Gastrocnemius medialis (tissue), 4 donors: ENCODE measurements at regions of chr15 and their contacts with region 1.

Region 1: GRCh38 chr15:56245871-56246814 is 2.5 kb upstream of the RFX7 start:
- DNase-seq: peak; percentile 69 to 82
- ATAC-seq: peak; percentile 53 to 77
- H3K4me3 ChIP-seq: peak overlapping the region; percentile 36 to 62 (median 42)
- H3K27ac ChIP-seq: peak overlapping the region; percentile 79 to 97 (median 84)
- H3K4me1 ChIP-seq: peaks cover 30 to 33% of the 10 kb centered on the region in 2 donors
- H3K27me3 ChIP-seq: no peaks in the 10 kb centered on the region
- CTCF ChIP-seq: peak; percentile 90 to 99 (median 99)
- POLR2A ChIP-seq: no peak

Region 2: DNA sequence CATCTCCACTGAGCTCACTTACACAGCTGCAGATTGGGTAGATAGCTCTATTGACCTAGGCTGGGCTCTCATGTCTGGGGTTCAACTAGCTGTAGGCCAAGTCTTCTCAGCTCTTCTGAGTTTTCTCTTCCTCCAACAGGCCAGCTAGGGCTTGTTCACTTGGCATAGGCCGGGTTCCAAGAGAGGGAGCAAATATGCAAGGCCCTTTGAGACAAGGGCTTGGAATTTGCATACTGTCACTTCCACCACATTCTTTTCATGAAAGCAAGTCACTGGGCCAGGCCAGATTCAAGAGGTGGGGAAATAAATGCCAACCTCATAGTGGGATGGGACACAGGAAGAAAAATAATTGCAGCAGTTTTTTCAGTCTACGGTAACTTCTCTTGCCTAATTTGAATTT is 901.9 kb before region 1 on chr15:
- in situ Hi-C with region 1: no loop called
- intact Hi-C with region 1: no loop called
- DNase-seq: no peak
- ATAC-seq: no peak
- H3K4me3 ChIP-seq: no peak overlapping the region
- H3K27ac ChIP-seq: no peak overlapping the region
- H3K4me1 ChIP-seq: no peaks in the 10 kb centered on the region
- H3K27me3 ChIP-seq: no peaks in the 10 kb centered on the region
- CTCF ChIP-seq: no peak
- POLR2A ChIP-seq: no peak

Region 3: DNA sequence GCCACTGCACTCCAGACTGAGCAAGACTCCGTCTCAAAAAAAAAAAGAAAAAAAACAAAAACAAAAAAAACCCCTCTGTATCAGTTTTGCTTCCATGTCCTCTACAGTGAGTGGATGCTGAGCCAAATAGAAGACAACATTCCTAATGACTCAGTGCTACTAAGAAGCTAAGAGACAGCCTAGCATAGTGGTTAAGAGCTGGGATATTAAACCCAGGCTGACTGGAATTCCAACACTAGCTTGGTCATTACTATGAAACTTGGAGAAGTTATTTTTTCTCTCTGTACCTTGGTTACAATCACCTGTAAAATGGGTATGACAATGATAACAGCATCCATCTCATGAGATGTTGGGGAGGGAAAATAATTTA is 597.1 kb before region 1 on chr15:
- in situ Hi-C with region 1: no loop called
- intact Hi-C with region 1: loop called (anchors 10 kb)
- DNase-seq: no peak
- ATAC-seq: no peak
- H3K4me3 ChIP-seq: no peak overlapping the region
- H3K27ac ChIP-seq: no peak overlapping the region
- H3K4me1 ChIP-seq: no peaks in the 10 kb centered on the region
- H3K27me3 ChIP-seq: no peaks in the 10 kb centered on the region
- CTCF ChIP-seq: no peak
- POLR2A ChIP-seq: no peak

Region 4: GRCh38 chr15:55993111-55993803 is 252.9 kb before region 1 on chr15 and contains the start of gene NEDD4:
- in situ Hi-C with region 1: loop called in 1 of 4 experiments (anchors 25 kb)
- intact Hi-C with region 1: loop called (anchors 2 kb)
- DNase-seq: peak; percentile 77 to 78
- ATAC-seq: peak; percentile 98
- H3K4me3 ChIP-seq: peak within 1 kb of the TSS; percentile 80 to 99 (median 84)
- H3K27ac ChIP-seq: peak within 1 kb of the TSS; percentile 85 to 96 (median 88)
- H3K4me1 ChIP-seq: peaks cover 9% of the 10 kb centered on the region in 2 donors
- H3K27me3 ChIP-seq: no peaks in the 10 kb centered on the region
- CTCF ChIP-seq: peak in 3 of 5 experiments; percentile 41 to 75 (median 62)
- POLR2A ChIP-seq: peak; percentile 50 to 62
- total RNA-seq, gene NEDD4: 45.4 to 475 (median 205) TPM

Region 5: DNA sequence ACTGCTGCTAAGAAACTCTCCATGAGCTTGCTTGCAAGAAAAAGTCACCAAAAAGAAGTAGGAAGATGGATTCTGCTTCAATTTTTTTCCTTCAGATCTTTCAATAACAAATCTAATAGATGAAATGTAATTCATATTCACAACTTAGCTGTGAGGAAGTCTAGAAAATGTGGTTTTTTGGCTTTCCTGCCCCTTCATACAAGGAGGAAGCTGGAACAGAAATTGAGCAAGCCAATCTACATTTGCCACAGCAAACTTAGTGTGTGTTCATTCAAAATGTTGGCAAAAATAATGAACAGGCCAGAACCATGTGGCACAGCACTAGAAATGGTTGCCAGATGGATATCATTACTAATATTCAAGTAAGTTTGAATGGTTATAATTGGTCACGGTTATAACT is 159.6 kb before region 1 on chr15:
- in situ Hi-C with region 1: no loop called
- intact Hi-C with region 1: no loop called
- DNase-seq: no peak
- ATAC-seq: no peak
- H3K4me3 ChIP-seq: no peak overlapping the region
- H3K27ac ChIP-seq: no peak overlapping the region
- H3K4me1 ChIP-seq: peaks cover 0 to 7% of the 10 kb centered on the region in 2 donors
- H3K27me3 ChIP-seq: no peaks in the 10 kb centered on the region
- CTCF ChIP-seq: no peak
- POLR2A ChIP-seq: no peak

Region 6: DNA sequence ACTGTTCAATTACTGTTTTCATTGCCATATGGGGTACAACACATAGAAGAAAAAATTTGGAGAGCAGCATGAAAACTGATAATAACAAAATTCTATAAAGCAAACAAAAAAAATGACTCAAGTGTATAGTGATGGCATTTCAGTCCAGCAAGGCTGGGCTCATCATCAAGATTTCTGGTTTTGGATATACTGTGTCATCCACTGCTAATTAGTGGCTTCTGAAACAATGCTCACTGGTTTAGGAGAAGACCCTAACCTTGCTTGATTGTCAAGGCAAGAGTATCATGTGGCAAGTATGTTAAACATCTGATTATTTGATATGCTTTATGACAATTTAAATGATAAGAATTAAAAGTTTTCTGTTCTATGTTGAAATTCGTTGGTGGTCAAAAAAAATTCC is 99.4 kb before region 1 on chr15:
- in situ Hi-C with region 1: loop called in 1 of 4 experiments (anchors 25 kb)
- intact Hi-C with region 1: no loop called
- DNase-seq: no peak
- ATAC-seq: no peak
- H3K4me3 ChIP-seq: no peak overlapping the region
- H3K27ac ChIP-seq: no peak overlapping the region
- H3K4me1 ChIP-seq: peaks cover 10 to 13% of the 10 kb centered on the region in 2 donors
- H3K27me3 ChIP-seq: no peaks in the 10 kb centered on the region
- CTCF ChIP-seq: no peak
- POLR2A ChIP-seq: no peak

Region 7: DNA sequence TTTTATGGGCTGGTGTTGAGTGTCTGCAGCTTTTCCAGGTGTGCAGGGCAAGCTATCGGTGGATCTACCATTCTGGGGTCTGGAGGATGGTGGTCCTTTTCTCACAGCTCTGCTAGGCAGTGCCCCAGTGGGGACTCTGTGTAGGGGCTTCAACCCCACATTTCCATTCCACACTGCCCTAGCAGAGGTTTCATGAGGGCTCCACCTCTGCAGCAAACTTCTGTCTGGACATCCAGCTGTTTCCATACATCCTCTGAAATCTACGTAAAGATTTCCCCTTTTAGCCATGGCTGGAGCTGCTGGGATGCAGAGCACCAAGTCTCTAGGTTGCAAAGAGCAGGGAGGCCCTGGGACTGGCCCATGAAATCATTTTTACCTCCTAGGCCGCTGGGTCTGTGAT is 14.1 kb before region 1 on chr15:
- in situ Hi-C with region 1: no loop called
- intact Hi-C with region 1: no loop called
- DNase-seq: no peak
- ATAC-seq: no peak
- H3K4me3 ChIP-seq: no peak overlapping the region
- H3K27ac ChIP-seq: no peak overlapping the region
- H3K4me1 ChIP-seq: peaks cover 19 to 21% of the 10 kb centered on the region in 2 donors
- H3K27me3 ChIP-seq: no peaks in the 10 kb centered on the region
- CTCF ChIP-seq: no peak
- POLR2A ChIP-seq: no peak

Region 8: DNA sequence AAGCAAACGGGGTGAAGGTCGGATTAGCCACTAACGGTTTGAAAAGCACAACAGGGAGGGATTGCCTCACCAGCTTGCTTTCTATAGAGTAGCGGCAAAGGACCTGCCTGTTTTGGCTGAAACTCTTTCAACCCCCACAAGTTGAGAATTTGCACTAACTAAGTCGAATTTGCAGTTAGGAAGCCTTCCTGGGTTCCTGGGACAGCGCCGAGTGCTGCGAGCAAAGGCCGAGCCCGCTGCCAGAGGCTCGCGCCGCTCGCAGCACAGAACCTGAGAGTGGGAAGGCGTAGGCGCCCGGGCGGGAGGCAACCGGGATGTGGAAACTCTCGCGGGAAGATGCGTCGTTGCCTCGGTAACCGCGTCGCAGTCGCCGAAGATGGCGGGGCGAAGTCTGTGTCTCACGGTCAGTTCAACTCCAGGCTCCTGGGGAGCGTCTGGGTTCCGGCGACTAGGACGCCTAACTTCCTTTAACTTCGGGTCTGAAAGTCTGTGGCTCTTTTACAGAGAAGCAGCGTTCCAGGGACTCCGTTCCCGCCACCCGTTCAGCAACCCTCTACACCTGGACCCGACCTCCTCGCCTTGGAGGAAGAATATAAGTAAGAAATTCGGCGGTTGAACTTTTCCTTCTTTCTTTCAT is 119.0 kb after region 1 on chr15 and contains the start of gene TEX9:
- in situ Hi-C with region 1: no loop called
- intact Hi-C with region 1: loop called (anchors 10 kb)
- DNase-seq: peak; percentile 49 to 71
- ATAC-seq: peak; percentile 91 to 97
- H3K4me3 ChIP-seq: peak within 1 kb of the TSS; percentile 58 to 77 (median 63)
- H3K27ac ChIP-seq: peak within 1 kb of the TSS in 1 of 4 donors; percentile 25
- H3K4me1 ChIP-seq: no peaks in the 10 kb centered on the region
- H3K27me3 ChIP-seq: no peaks in the 10 kb centered on the region
- CTCF ChIP-seq: no peak
- POLR2A ChIP-seq: no peak
- total RNA-seq, gene TEX9: 0.44 TPM in 1 of 4 donors, not detected in the others